ENCODE measurements at regions of chr4 and their contacts with region 1.

Region 1: DNA sequence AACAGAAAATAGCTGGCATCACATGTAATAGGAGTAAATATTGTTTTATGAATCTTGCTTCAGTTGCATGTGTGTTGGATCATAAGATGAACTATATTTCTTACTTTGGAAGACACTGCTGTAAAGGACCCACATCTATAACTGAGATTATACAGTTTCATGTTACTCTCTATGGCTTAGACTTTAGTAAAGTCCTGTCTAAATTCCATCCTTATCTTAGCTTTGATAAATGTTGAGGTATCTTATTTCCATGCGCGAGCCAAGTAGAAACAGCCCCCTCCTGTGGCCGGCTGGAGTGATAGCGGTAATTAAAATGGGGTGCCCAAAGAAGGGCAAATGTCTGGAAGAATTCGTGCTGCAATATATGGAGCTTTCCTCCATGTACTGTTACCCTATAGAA is 43.0 kb downstream of the CCDC158 start:
- H3K4me3 ChIP-seq: no peak overlapping the region
- H3K27ac ChIP-seq: no peak overlapping the region
- H3K4me1 ChIP-seq: peaks cover 2% of the 10 kb centered on the region; the same call in 1 of the 2 replicates
- CTCF ChIP-seq: no peak

Region 2: GRCh38 chr4:76279472-76279871 is 98.4 kb before region 1 on chr4:
- CTCF ChIA-PET with region 1: interaction called, 13 read pairs
- POLR2A ChIA-PET with region 1: no interaction called
- H3K4me3 ChIP-seq: no peak overlapping the region
- H3K27ac ChIP-seq: no peak overlapping the region
- H3K4me1 ChIP-seq: no peaks in the 10 kb centered on the region
- CTCF ChIP-seq: no peak

Region 3: DNA sequence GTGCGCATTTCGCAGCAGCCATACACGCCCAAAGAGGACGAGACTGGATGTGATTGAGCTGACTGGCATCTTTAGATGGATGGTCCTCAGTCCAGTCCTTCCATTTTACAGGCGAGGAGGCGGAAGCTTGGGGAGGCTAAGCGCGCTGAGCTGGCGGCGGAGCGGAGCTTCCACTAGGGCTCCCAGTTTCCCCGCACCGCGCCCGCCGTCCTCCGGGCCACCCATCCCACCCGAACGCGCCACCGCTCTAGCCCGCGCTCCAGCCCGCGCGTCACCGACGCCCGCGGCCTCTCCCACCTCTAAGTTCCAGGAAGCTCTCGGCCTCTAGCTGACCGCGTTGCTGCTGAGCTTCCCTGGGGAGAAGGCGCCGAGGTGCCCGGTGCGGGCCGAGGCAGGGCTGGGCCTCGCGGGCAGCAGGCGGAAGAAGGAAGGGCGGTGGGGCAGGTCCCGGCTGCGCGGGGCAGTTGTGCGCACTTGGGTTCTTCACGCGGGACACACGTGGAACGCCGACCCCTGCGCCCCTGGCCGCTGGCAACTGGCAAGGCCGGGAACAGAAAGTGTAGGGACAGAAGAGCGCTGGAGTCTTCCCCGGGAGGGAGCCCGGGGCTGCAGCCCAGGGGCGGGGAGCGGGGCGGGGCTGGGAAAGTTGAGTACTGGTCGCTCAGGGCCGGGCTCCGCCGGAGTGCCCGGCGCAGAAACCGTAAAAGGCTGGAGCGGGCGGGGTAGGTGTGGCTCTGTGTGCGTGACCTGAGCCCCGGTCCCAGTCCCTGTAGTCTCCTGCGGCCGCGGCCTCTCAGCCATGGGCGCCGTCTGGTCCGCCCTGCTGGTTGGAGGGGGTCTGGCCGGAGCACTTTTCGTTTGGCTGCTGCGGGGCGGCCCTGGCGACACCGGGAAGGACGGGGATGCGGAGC is 71.7 kb before region 1 on chr4 and contains the start of gene STBD1:
- CTCF ChIA-PET with region 1: interaction called, 28 read pairs
- POLR2A ChIA-PET with region 1: interaction called, 6 read pairs
- H3K4me3 ChIP-seq: peak within 1 kb of the TSS; percentile 66
- H3K27ac ChIP-seq: peak within 1 kb of the TSS; percentile 75; the same call in 1 of the 2 replicates
- H3K4me1 ChIP-seq: no peaks in the 10 kb centered on the region
- CTCF ChIP-seq: peak; percentile 43

Region 4: GRCh38 chr4:76407440-76408119 is 29.7 kb after region 1 on chr4:
- CTCF ChIA-PET with region 1: no interaction called
- POLR2A ChIA-PET with region 1: no interaction called
- H3K4me3 ChIP-seq: no peak overlapping the region
- H3K27ac ChIP-seq: no peak overlapping the region
- H3K4me1 ChIP-seq: no peaks in the 10 kb centered on the region
- CTCF ChIP-seq: no peak